HEK293 (cell line): ENCODE measurements at regions of chr7 and their contacts with region 1.

Region 1: DNA sequence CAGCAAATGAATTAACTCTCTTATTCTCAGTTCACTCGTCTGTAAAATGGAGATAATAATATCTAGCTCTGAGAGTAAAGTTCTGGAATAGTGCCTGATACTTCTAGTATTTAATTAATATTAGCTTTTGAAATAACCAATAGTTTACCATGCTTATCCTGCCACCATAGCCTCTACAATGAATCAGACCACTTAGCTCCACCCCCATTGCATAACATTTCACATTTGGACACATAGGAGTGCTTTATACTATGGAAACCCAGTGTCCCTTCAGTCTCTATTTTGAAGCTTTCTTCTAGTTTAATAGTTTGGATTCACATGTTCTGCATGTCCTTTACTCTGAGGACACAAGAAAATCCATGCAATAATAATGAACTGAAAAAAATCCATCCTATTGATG is 427.3 kb upstream of the C7orf33 start:
- H3K4me3 ChIP-seq: no peak overlapping the region
- H3K27ac ChIP-seq: no peak overlapping the region
- H3K4me1 ChIP-seq: no peaks in the 10 kb centered on the region
- CTCF ChIP-seq: no peak

Region 2: GRCh38 chr7:148142660-148143248 is 20.5 kb before region 1 on chr7:
- CTCF ChIA-PET with region 1: interaction called, 13 read pairs
- POLR2A ChIA-PET with region 1: no interaction called
- H3K4me3 ChIP-seq: no peak overlapping the region
- H3K27ac ChIP-seq: no peak overlapping the region
- H3K4me1 ChIP-seq: no peaks in the 10 kb centered on the region
- CTCF ChIP-seq: no peak; the same call in 1 of the 2 replicates